ENCODE measurements at regions of chrX and their contacts with region 1.

Region 1: DNA sequence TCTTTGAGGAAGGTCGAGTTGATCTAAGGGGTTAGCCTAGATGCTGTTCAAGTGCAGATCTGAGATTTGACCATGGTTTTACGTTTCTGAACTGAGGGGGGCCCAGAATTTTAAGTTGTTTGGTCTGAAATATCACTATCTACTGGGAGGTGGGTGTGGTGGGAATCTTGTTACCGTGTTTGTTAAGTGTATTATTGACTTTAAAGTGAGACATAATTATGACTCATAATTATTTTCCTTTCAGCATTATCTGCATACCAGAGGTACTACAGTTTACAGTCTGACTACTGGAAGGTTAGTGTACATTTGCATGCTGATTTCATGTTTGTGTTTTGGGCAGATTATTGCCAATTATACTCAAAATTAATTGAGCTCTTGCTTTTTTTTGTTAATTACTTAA is 101.4 kb downstream of the KDM6A start:
- DNase-seq: peak; percentile 19
- H3K4me3 Mint-ChIP-seq: peak overlapping the region; percentile 6
- H3K27ac Mint-ChIP-seq: peak overlapping the region; percentile 64
- H3K4me1 Mint-ChIP-seq: peaks cover 44% of the 10 kb centered on the region
- H3K27me3 Mint-ChIP-seq: no peaks in the 10 kb centered on the region
- CTCF ChIP-seq: no peak

Region 2: GRCh38 chrX:45011131-45011530 is 36.7 kb after region 1 on chrX:
- CTCF ChIA-PET with region 1: no interaction called
- intact Hi-C with region 1: loop called (anchors 5 kb)
- DNase-seq: no peak
- H3K4me3 Mint-ChIP-seq: no peak overlapping the region
- H3K27ac Mint-ChIP-seq: no peak overlapping the region
- H3K4me1 Mint-ChIP-seq: peaks cover 21% of the 10 kb centered on the region
- H3K27me3 Mint-ChIP-seq: no peaks in the 10 kb centered on the region
- CTCF ChIP-seq: no peak

Measured in Calu3 (cell line).